ENCODE measurements at regions of chr5 and their contacts with region 1.

Region 1: GRCh38 chr5:42423285-42424165 is at the start of gene GHR:
- DNase-seq: peak; percentile 65 to 96 (median 76)

Region 2: GRCh38 chr5:42583322-42583721 is 159.8 kb after region 1 on chr5:
- intact Hi-C with region 1: loop called (anchors 2 kb)
- DNase-seq: peak in 2 of 10 donors; percentile 21 to 33

Region 3: DNA sequence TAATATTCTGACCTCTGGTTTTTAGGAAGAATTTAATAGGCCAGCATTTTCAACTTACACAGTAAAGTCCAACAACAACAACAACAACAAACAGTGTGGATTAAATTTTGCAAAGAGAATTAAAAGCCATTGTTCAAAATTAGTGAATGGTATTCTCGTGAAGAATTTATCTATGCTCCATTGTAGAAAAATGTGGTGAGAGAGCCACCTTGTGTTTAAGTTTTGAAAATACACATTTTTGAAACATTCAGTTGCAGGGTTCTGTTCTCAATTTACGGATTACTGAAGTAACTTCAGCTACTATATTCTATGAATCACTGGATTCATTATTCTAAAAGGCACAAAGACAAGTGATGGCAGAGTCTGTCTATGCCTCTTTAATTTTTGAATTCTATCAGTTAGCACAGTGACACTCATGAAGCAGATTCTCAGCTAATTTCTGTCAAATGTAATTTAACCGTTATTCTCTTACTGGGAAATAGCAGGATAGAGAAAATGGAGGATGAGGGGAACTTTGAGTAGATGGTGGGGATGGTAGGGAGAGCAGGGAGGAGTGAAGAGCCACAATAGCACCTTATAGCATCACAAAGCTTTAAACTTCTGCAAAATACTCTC is 344.1 kb after region 1 on chr5:
- intact Hi-C with region 1: loop called (anchors 2 kb)
- DNase-seq: no peak